Caco-2 (cell line): ENCODE measurements at regions of chr5 and their contacts with region 1.

Region 1: DNA sequence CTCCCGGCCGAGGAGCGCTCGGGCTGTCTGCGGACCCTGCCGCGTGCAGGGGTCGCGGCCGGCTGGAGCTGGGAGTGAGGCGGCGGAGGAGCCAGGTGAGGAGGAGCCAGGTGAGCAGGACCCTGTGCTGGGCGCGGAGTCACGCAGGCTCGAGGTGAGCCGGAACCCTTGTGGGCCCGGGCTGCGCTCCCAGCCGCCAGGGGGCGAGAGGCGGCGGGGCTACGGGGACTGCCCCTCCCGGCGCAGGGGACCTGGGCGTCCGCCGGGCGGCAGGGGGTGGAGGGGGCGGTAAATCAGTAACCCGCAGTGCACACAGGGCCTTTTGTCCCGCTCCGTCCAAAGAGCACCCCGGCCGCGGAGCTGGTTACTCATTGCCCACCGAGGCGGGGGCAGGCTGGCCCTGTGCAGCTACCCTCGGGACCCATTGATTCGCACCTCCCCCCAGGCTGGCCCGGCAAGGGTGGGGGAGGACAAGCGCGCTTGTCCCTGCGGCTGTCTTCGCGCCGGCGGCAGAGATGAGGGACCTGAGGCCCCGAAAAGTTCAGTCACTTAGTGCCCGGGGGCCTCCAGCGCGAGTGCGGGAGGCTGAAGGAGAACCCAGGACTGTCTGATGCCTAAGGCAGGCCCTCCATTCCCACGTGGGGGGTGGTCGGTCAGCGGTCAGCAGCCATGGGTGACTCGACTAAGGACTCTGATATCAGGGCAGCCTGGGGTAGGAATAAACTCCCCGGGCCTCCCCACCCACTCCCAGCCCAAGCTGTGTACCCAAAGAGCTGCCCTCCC is 400 bp downstream of the FGFR4 start:
- DNase-seq: peak; percentile 98
- H3K4me3 ChIP-seq: peak overlapping the region; percentile 93
- H3K4me3 Mint-ChIP-seq: peak overlapping the region; percentile 88
- H3K27ac Mint-ChIP-seq: peak overlapping the region; percentile 93
- H3K4me1 ChIP-seq: peaks cover 55% of the 10 kb centered on the region
- H3K4me1 Mint-ChIP-seq: peaks cover 28% of the 10 kb centered on the region
- H3K27me3 ChIP-seq: no peaks in the 10 kb centered on the region
- H3K27me3 Mint-ChIP-seq: no peaks in the 10 kb centered on the region
- CTCF ChIP-seq: peak; percentile 83 to 94

Region 2: DNA sequence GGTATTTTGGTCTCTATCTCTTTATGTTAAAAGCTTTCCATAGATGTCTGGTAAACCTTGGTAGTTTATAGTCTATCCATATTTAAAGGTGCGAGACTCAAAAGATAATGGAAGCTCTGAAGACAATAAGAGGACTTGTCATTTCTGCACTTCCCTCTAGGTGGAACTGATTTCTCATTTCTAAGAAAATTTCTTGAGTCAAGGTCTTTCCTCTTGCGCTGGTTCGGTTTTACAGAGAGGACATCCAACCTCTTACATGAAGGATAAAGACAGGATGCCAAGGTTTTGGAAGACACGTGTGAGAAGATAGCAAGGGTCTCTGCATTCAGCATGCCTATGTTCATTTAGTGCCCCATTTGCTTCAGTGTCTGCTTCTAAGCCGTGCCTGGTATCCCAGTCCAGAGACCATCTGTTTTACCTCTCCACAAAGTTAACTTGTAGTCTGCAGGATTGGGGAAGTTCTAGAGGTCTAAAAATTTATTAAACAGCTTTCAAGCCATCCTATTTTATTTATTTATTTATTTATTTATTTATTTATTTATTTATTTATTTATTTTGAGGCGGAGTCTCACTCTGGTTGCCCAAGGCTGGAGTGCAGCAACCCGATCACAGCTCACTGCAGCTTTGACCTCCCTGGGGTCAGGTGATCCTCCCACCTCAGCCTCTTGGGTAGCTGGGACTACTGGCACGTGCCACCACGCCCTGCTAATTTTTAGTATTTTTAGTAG is 767.1 kb before region 1 on chr5:
- CTCF ChIA-PET with region 1: no interaction called
- POLR2A ChIA-PET with region 1: no interaction called
- intact Hi-C with region 1: no loop called
- DNase-seq: no peak
- H3K4me3 ChIP-seq: no peak overlapping the region
- H3K4me3 Mint-ChIP-seq: no peak overlapping the region
- H3K27ac Mint-ChIP-seq: no peak overlapping the region
- H3K4me1 ChIP-seq: no peaks in the 10 kb centered on the region
- H3K4me1 Mint-ChIP-seq: no peaks in the 10 kb centered on the region
- H3K27me3 ChIP-seq: no peaks in the 10 kb centered on the region
- H3K27me3 Mint-ChIP-seq: no peaks in the 10 kb centered on the region
- CTCF ChIP-seq: peak; percentile 23 to 30

Region 3: DNA sequence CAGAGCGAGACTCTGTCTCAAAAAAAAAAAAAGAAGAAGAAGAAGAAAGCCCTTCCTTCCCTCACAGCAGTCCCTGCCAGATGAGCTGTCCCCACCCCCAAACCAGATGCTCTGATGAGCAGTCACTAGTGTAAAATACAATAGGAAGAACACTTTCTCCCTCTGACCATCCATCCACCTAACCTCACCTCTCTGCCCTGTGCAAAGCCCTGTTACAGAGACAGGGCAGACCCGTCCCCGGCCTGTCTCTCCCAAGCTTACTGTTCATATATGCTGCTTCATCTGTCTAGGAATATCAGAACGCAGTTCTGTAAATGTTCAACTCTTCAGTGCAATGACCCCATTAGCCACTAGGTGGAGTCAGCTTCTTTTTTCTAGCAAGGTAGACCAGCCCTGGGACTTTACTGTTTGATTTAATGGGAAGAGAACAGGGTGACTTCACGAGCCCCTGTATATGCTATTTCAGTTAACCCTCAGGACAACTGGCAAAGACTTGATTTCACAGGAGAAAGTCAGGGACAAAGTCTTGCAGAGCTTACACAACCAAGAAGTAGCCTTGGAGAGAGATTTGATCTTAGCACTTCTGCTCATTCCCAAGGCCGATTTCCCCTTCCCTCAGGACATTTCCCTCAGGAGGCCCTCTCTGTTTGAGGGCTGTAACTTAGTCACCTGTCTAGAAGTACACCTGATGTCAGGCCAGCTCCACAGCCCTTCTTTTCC is 15.3 kb before region 1 on chr5:
- CTCF ChIA-PET with region 1: interaction called, 81 read pairs
- POLR2A ChIA-PET with region 1: interaction called, 10 read pairs
- intact Hi-C with region 1: loop called (anchors 2 kb)
- DNase-seq: peak; percentile 85 to 87
- H3K4me3 ChIP-seq: no peak overlapping the region
- H3K4me3 Mint-ChIP-seq: peak overlapping the region; percentile 4
- H3K27ac Mint-ChIP-seq: peak overlapping the region; percentile 6
- H3K4me1 ChIP-seq: peaks cover 9% of the 10 kb centered on the region; the same call in 1 of the 2 replicates
- H3K4me1 Mint-ChIP-seq: peaks cover 12% of the 10 kb centered on the region
- H3K27me3 ChIP-seq: no peaks in the 10 kb centered on the region
- H3K27me3 Mint-ChIP-seq: no peaks in the 10 kb centered on the region
- CTCF ChIP-seq: peak; percentile 82 to 93

Region 4: GRCh38 chr5:177098470-177099141 is 11.5 kb after region 1 on chr5:
- CTCF ChIA-PET with region 1: interaction called, 15 read pairs
- POLR2A ChIA-PET with region 1: interaction called, 33 read pairs
- intact Hi-C with region 1: no loop called
- DNase-seq: no peak
- H3K4me3 ChIP-seq: no peak overlapping the region
- H3K4me3 Mint-ChIP-seq: no peak overlapping the region
- H3K27ac Mint-ChIP-seq: peak overlapping the region; percentile 13
- H3K4me1 ChIP-seq: peaks cover 19% of the 10 kb centered on the region
- H3K4me1 Mint-ChIP-seq: peaks cover 11% of the 10 kb centered on the region
- H3K27me3 ChIP-seq: no peaks in the 10 kb centered on the region
- H3K27me3 Mint-ChIP-seq: no peaks in the 10 kb centered on the region
- CTCF ChIP-seq: no peak

Region 5: DNA sequence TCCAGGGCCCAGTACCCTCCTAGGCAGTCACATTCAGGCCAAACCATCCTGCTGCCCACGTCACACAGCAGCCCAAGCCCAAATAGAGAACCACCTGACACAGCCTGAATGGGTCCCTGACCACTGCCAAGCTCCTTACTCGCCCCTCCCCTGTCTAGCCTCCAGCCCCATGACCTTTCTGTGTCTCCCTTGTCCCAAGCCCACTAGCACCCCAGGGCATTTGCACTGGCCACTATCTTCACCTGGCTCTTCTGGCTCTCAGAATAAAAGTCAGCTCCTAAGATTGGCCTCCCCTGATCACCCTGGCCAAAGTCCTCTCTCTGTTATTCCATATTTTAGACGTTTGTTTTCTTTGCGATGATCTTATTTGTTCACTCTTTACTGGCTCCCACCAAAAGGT is 20.0 kb after region 1 on chr5:
- CTCF ChIA-PET with region 1: interaction called, 60 read pairs
- POLR2A ChIA-PET with region 1: interaction called, 9 read pairs
- intact Hi-C with region 1: loop called (anchors 1 kb)
- DNase-seq: no peak
- H3K4me3 ChIP-seq: no peak overlapping the region
- H3K4me3 Mint-ChIP-seq: no peak overlapping the region
- H3K27ac Mint-ChIP-seq: peak overlapping the region; percentile 6
- H3K4me1 ChIP-seq: peaks cover 24% of the 10 kb centered on the region
- H3K4me1 Mint-ChIP-seq: peaks cover 39% of the 10 kb centered on the region
- H3K27me3 ChIP-seq: no peaks in the 10 kb centered on the region
- H3K27me3 Mint-ChIP-seq: no peaks in the 10 kb centered on the region
- CTCF ChIP-seq: no peak